Activated CD4-positive, alpha-beta T cell treated with anti-CD3 and anti-CD28 coated beads for 36 hours (primary cell): ENCODE measurements at regions of chr4 and their contacts with region 1.

Region 1: DNA sequence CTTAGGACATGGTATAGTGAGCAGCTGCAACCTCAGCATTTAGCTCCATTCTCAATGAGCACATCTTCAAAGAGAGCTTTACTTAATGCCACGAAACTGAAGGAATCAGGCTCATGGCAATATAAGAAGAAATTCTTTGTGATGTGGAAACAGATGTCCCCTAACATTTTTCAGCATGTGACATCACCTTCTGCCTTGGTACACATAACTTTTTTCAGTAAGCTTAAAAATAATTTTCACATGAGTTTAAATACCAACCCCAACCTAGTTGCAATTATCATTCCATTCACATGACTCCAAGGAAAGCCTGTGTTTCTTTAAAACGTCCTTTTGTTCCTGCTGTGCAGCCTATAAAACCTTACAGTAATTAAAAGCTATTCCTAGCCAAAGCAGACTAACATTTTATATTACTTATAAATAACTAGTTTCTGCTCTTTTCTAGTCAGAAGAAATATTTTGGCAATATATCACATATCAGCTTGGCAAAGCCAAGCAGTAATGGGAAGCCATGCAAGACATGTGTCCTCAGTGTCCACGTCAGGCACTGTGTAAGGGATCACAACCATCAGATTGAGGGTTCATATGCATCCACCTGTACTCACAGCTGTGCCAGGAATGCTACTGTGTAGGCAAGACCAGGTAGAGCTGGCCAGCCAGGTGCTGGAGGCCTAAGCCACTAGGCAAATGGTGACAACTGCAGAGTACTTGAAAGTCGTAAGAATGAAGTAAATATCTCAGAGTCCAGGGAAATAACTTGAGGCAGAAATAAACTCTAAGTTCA is 466.6 kb downstream of the INPP4B start:
- DNase-seq: no peak
- ATAC-seq: no peak
- H3K4me3 Mint-ChIP-seq: no peak overlapping the region
- H3K27ac Mint-ChIP-seq: peak overlapping the region; percentile 93
- H3K4me1 Mint-ChIP-seq: peaks cover 83% of the 10 kb centered on the region
- H3K27me3 Mint-ChIP-seq: no peaks in the 10 kb centered on the region

Region 2: DNA sequence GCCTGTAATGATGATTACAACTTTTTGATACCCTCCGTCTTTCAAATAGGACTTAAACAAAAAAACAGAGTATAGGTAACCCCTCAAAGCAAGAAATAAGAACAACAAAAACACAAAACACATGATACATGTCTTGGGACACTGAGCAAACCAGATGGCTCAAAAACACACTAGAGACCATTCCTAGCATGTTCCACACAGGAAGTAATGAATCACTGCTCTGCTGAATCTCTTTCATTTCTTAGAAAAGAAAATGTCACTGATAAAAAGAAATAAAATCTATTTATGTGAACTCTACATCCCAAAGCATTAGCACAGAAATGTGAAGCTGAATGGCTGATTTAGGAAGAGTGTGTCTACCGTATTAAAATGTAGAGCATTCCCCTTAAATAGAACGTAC is 877.5 kb before region 1 on chr4:
- CTCF ChIA-PET with region 1: no interaction called
- POLR2A ChIA-PET with region 1: no interaction called
- intact Hi-C with region 1: no loop called
- DNase-seq: no peak
- ATAC-seq: no peak
- H3K4me3 Mint-ChIP-seq: no peak overlapping the region
- H3K27ac Mint-ChIP-seq: no peak overlapping the region
- H3K4me1 Mint-ChIP-seq: no peaks in the 10 kb centered on the region
- H3K27me3 Mint-ChIP-seq: no peaks in the 10 kb centered on the region

Region 3: DNA sequence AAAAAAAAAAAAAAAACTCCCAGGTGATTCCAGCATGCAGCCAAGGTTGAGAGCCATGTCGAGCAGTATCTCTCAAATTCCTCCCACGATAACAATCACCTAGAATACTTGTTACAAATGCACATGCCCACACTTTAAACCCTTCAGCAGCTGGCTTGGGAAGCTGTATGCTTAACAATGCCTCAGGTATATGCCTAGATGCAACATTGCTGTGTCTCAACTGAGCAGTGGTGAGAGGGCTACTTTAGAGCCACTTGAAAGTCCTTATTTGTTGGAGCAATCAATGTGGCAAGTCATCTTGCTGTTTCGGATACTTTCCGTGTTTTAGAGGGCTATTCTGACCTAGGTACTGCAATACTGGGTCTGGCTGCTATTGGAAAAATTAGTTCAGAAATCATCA is 20.8 kb before region 1 on chr4:
- CTCF ChIA-PET with region 1: interaction called, 73 read pairs
- POLR2A ChIA-PET with region 1: interaction called, 3 read pairs
- intact Hi-C with region 1: loop called (anchors 2 kb)
- DNase-seq: no peak
- ATAC-seq: no peak
- H3K4me3 Mint-ChIP-seq: no peak overlapping the region
- H3K27ac Mint-ChIP-seq: peak overlapping the region; percentile 66
- H3K4me1 Mint-ChIP-seq: peaks cover 88% of the 10 kb centered on the region
- H3K27me3 Mint-ChIP-seq: no peaks in the 10 kb centered on the region

Region 4: DNA sequence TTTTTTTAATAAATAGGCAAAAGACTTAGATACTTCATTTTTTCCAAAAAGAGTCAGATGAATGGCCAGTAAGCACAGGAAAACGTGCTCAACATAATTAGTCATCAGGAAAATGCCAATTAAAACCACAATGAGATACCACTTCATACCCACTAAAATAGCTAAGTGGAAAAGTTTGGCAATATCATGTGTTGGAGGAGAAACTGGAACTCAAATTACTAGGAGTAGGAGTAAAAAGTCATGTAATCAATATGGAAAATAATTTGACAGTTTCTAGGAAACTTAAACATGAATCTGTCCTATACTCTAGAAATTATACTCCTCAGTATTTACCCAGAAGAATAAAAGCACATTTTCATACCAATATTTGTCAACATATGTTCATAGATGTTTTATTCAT is 16.8 kb after region 1 on chr4:
- CTCF ChIA-PET with region 1: interaction called, 4 read pairs
- POLR2A ChIA-PET with region 1: interaction called, 10 read pairs
- intact Hi-C with region 1: loop called (anchors 1 kb)
- DNase-seq: no peak
- ATAC-seq: peak; percentile 28
- H3K4me3 Mint-ChIP-seq: peak overlapping the region; percentile 47
- H3K27ac Mint-ChIP-seq: peak overlapping the region; percentile 94
- H3K4me1 Mint-ChIP-seq: peaks cover 82% of the 10 kb centered on the region
- H3K27me3 Mint-ChIP-seq: no peaks in the 10 kb centered on the region

Region 5: DNA sequence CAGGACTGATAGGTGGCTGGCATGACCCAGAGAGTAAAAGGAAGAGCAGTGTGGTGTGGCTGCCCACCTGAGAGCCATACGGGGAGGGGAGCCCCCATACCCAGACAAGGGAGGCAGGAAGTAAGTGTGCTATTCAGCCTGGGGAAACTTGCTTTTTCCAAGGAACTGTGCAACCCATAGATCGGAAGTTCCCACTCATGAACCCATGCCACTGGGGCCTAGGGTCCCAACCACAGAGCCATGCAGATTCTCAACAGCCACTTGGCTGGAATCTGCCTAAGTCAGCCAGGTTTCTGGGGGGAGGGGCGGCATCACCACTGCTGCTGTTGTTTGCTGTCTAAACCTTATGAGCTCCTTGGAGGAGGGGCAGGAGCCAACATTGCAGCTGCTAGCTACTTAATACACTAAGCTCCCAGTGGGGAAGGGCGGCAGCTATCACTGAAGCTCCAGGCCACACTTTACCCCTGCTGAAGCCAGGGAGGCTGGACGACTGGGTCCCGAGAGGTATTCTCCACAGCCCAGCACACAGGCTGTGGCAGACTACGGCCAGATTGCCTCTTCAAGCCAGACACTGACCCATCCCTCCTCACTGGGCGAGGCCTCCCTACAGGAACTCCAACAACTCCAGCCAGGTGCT is 56.2 kb after region 1 on chr4:
- CTCF ChIA-PET with region 1: no interaction called
- POLR2A ChIA-PET with region 1: no interaction called
- intact Hi-C with region 1: no loop called
- DNase-seq: no peak
- ATAC-seq: no peak
- H3K4me3 Mint-ChIP-seq: no peak overlapping the region
- H3K27ac Mint-ChIP-seq: peak overlapping the region; percentile 33
- H3K4me1 Mint-ChIP-seq: peaks cover 33% of the 10 kb centered on the region
- H3K27me3 Mint-ChIP-seq: no peaks in the 10 kb centered on the region

Region 6: GRCh38 chr4:142549726-142550463 is 170.4 kb after region 1 on chr4:
- CTCF ChIA-PET with region 1: interaction called, 3 read pairs
- POLR2A ChIA-PET with region 1: no interaction called
- intact Hi-C with region 1: loop called in 1 of 2 experiments (anchors 1 kb)
- DNase-seq: no peak
- ATAC-seq: peak; percentile 83
- H3K4me3 Mint-ChIP-seq: no peak overlapping the region
- H3K27ac Mint-ChIP-seq: peak overlapping the region; percentile 86
- H3K4me1 Mint-ChIP-seq: peaks cover 66% of the 10 kb centered on the region
- H3K27me3 Mint-ChIP-seq: no peaks in the 10 kb centered on the region

Region 7: GRCh38 chr4:142824368-142824767 is 444.9 kb after region 1 on chr4:
- CTCF ChIA-PET with region 1: no interaction called
- POLR2A ChIA-PET with region 1: no interaction called
- intact Hi-C with region 1: loop called in 1 of 2 experiments (anchors 1 kb)
- DNase-seq: no peak
- ATAC-seq: peak; percentile 96
- H3K4me3 Mint-ChIP-seq: peak overlapping the region; percentile 9
- H3K27ac Mint-ChIP-seq: peak overlapping the region; percentile 63
- H3K4me1 Mint-ChIP-seq: peaks cover 18% of the 10 kb centered on the region
- H3K27me3 Mint-ChIP-seq: no peaks in the 10 kb centered on the region